Heart left ventricle (tissue), 16 donors: ENCODE measurements at regions of chr20 and their contacts with region 1.

Region 1: GRCh38 chr20:50251992-50252511 is 61.4 kb downstream of the CEBPB start:
- DNase-seq: peak in 1 of 5 donors; percentile 1
- ATAC-seq: no peak
- H3K4me3 ChIP-seq: no peak overlapping the region
- H3K27ac ChIP-seq: no peak overlapping the region
- H3K4me1 ChIP-seq: no peaks in the 10 kb centered on the region
- H3K27me3 ChIP-seq: no peaks in the 10 kb centered on the region
- CTCF ChIP-seq: no peak
- POLR2A ChIP-seq: no peak

Region 2: DNA sequence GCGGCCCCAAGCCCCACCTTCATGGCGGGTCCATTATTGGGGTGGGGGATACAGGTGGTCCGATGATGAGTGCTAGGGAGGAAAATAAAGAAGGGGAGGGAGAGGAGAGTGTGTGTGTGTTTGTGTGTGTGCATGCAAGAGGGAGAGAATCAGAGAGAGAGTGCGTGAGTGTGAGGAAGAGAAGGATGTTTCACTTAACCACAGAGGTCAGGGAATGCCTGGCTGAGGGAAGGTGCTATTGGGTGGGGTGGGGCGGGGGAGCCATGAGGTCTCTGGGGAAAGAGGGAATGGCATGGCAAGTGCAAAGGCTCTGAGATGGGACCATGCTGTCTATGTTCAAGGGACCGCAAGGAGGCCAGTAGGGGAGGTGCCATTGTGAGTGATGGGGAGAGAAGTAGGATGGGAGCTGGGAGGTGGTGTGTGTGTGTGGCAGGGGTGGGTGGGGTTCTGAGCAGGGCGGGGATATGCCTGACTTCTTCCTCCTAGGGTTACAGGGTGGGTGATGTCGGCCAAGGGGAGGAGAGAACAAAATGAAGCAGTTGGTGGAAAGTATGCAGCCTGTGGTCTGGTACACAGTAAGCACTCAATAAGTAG is 38.4 kb before region 1 on chr20:
- intact Hi-C with region 1: loop called in 1 of 10 experiments (anchors 5 kb)
- DNase-seq: no peak
- ATAC-seq: no peak
- H3K4me3 ChIP-seq: no peak overlapping the region
- H3K27ac ChIP-seq: no peak overlapping the region
- H3K4me1 ChIP-seq: peaks cover 0 to 10% (median 0%) of the 10 kb centered on the region in 12 donors
- H3K27me3 ChIP-seq: no peaks in the 10 kb centered on the region
- CTCF ChIP-seq: no peak
- POLR2A ChIP-seq: no peak

Region 3: GRCh38 chr20:50635667-50636503 is 383.8 kb after region 1 on chr20:
- intact Hi-C with region 1: no loop called
- DNase-seq: peak; percentile 72 to 86 (median 79)
- ATAC-seq: peak; percentile 71 to 85 (median 74)
- H3K4me3 ChIP-seq: peak overlapping the region in 9 of 12 donors; percentile 10 to 44 (median 20)
- H3K27ac ChIP-seq: peak overlapping the region; percentile 15 to 77 (median 57)
- H3K4me1 ChIP-seq: peaks cover 0 to 30% (median 16%) of the 10 kb centered on the region in 12 donors
- H3K27me3 ChIP-seq: no peaks in the 10 kb centered on the region
- CTCF ChIP-seq: peak; percentile 76 to 94 (median 85)
- POLR2A ChIP-seq: peak in 1 of 2 donors; percentile 9